ENCODE measurements at regions of chrX and their contacts with region 1.

Region 1: DNA sequence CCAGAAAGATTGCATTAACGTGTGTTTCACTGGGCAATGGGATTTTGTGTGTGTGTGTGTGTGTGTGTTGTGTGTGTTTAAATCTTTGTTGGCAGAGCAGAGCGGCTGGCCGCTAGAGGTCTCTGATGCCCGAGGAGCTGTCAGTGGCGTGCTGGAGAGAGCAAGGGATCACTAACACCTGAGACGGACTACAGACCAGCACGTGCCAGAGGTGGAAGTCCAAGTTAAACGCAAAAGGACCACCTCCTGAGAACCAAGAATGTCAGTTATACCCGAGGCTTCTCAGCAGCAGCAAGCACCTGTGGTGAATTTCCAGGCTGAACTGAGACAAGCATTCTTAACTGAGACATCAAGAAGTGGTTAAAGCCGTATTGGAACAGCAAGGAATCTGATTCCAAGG is 9.0 kb upstream of the SLC25A14 start:
- DNase-seq: peak; percentile 65 to 78
- H3K4me3 ChIP-seq: no peak overlapping the region
- H3K4me3 Mint-ChIP-seq: no peak overlapping the region
- H3K27ac Mint-ChIP-seq: no peak overlapping the region
- H3K4me1 ChIP-seq: no peaks in the 10 kb centered on the region
- H3K4me1 Mint-ChIP-seq: no peaks in the 10 kb centered on the region
- H3K27me3 ChIP-seq: no peaks in the 10 kb centered on the region
- H3K27me3 Mint-ChIP-seq: peaks cover 2% of the 10 kb centered on the region
- CTCF ChIP-seq: peak in 1 of 2 experiments; percentile 59

Region 2: DNA sequence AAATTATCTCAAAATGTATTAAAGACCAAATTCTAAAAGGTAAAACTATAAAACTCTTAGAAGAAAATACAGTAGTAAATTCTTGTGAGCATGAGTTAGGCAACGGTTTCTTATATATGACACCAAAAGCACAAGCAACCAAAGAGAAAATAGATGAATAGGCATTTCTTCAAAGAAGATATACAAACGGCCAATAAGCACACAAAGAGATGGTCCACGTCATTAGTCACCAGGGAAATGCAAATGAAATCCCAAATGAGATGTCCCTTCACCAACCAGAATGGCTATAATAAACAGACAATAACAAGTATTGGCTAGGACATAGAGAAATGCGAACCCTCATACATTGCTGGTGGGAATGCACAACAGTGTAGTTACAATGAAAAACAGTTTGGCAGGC is 114.4 kb before region 1 on chrX:
- CTCF ChIA-PET with region 1: no interaction called
- POLR2A ChIA-PET with region 1: no interaction called
- intact Hi-C with region 1: no loop called
- DNase-seq: no peak
- H3K4me3 ChIP-seq: no peak overlapping the region
- H3K4me3 Mint-ChIP-seq: no peak overlapping the region
- H3K27ac Mint-ChIP-seq: no peak overlapping the region
- H3K4me1 ChIP-seq: no peaks in the 10 kb centered on the region
- H3K4me1 Mint-ChIP-seq: no peaks in the 10 kb centered on the region
- H3K27me3 ChIP-seq: no peaks in the 10 kb centered on the region
- H3K27me3 Mint-ChIP-seq: no peaks in the 10 kb centered on the region
- CTCF ChIP-seq: no peak

Region 3: GRCh38 chrX:130393451-130394074 is 62.9 kb after region 1 on chrX:
- CTCF ChIA-PET with region 1: no interaction called
- POLR2A ChIA-PET with region 1: no interaction called
- intact Hi-C with region 1: loop called (anchors 5 kb)
- DNase-seq: peak; percentile 33 to 35
- H3K4me3 ChIP-seq: no peak overlapping the region
- H3K4me3 Mint-ChIP-seq: no peak overlapping the region
- H3K27ac Mint-ChIP-seq: no peak overlapping the region
- H3K4me1 ChIP-seq: no peaks in the 10 kb centered on the region
- H3K4me1 Mint-ChIP-seq: no peaks in the 10 kb centered on the region
- H3K27me3 ChIP-seq: no peaks in the 10 kb centered on the region
- H3K27me3 Mint-ChIP-seq: no peaks in the 10 kb centered on the region
- CTCF ChIP-seq: peak; percentile 34 to 70

Region 4: GRCh38 chrX:130902783-130903613 is 572.3 kb after region 1 on chrX and contains the start of gene ENOX2:
- CTCF ChIA-PET with region 1: no interaction called
- POLR2A ChIA-PET with region 1: no interaction called
- intact Hi-C with region 1: loop called (anchors 2 kb)
- DNase-seq: peak; percentile 91 to 95
- H3K4me3 ChIP-seq: peak within 1 kb of the TSS; percentile 64
- H3K4me3 Mint-ChIP-seq: no peak within 1 kb of the TSS
- H3K27ac Mint-ChIP-seq: no peak within 1 kb of the TSS
- H3K4me1 ChIP-seq: no peaks in the 10 kb centered on the region; the same call in 1 of the 2 replicates
- H3K4me1 Mint-ChIP-seq: no peaks in the 10 kb centered on the region
- H3K27me3 ChIP-seq: no peaks in the 10 kb centered on the region
- H3K27me3 Mint-ChIP-seq: peaks cover 3% of the 10 kb centered on the region
- CTCF ChIP-seq: no peak
- total RNA-seq, gene ENOX2: 7.0 and 11.4 TPM in 2 replicates

Measured in Caco-2 (cell line).